ENCODE measurements at regions of chr6 and their contacts with region 1.

Region 1: DNA sequence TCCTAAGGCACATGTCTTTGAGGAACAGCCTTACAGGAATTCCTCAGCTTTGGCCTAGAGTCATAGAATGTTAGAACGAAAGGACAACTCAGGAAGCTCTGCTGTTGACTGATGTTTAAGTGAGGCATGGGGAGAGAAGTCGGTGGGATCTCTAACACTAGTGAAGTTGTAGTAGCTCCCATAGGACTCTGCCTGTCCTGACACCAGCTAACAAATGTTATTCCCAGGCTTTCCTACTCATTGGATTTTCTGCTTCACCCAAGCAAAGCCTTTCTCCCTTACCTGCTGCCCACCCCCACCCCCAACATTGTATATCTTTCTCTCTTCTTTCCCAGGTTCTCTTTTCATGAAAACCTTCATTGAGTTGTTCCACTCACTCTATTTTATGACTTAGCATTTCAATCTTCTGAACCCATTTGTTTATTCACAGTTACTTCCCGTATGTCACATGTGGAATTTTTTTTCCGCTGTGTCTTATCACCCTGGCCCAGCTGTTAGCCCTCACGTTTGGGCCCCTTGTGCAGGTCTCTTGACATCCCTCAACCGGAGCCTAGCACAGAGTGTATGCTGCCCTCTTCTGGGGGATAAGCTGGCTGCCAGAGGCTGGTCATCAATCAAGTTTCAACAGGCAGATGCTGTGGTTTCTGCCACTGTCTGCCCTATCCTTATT is 39.2 kb upstream of the RNF8 start:
- DNase-seq: peak; percentile 70
- ATAC-seq: peak; percentile 80
- H3K4me3 Mint-ChIP-seq: no peak overlapping the region
- H3K27ac Mint-ChIP-seq: peak overlapping the region; percentile 76
- H3K4me1 Mint-ChIP-seq: peaks cover 3% of the 10 kb centered on the region
- H3K27me3 Mint-ChIP-seq: no peaks in the 10 kb centered on the region
- CTCF ChIP-seq: peak; percentile 71

Region 2: DNA sequence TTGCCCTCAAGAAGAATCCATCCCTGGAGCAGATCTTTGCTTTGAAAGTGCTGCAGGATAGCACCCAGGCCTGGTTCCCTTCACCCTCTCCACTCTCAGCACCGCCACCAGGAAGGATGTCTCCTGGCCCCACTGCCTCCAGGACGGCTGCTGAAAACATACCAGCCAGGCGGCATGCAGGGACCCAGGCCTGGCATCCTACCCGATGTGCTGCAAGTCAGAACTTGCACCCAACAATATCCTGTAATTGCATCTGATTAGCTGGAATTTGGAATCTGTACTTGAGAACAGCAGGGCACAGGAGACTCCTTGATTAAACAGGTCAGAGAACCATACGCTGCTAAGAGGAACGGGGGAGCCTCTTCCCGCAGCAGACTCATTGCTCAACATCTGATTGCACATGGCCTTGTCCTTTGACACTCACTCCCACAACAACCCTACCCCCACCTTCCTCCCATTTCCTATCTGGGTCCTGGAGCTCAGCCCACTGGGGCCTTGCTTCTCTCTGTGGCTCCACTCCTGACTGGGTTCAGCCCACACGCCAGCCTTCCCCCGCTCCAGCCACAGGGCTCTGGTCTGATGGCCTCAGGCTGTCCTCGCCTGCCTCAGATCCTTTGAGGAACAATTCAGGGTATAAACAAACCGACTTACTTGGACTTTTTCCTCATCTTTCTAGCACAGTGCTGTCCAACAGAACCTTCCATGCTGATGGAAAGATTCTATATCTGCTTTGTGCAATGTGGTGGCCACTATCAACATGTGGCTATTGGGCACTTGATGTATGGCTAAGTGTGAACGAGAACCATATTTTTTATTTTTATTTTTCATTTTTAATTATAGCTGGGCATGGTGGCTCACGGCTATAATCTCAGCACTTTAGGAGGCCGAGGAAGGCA is 231.1 kb before region 1 on chr6:
- CTCF ChIA-PET with region 1: no interaction called
- POLR2A ChIA-PET with region 1: no interaction called
- intact Hi-C with region 1: no loop called
- DNase-seq: no peak
- ATAC-seq: no peak
- H3K4me3 Mint-ChIP-seq: no peak overlapping the region
- H3K27ac Mint-ChIP-seq: no peak overlapping the region
- H3K4me1 Mint-ChIP-seq: no peaks in the 10 kb centered on the region
- H3K27me3 Mint-ChIP-seq: no peaks in the 10 kb centered on the region
- CTCF ChIP-seq: no peak

Region 3: GRCh38 chr6:37222125-37222967 is 92.3 kb before region 1 on chr6:
- CTCF ChIA-PET with region 1: interaction called, 11 read pairs
- POLR2A ChIA-PET with region 1: no interaction called
- intact Hi-C with region 1: no loop called
- DNase-seq: peak; percentile 88
- ATAC-seq: peak; percentile 98
- H3K4me3 Mint-ChIP-seq: peak overlapping the region; percentile 68
- H3K27ac Mint-ChIP-seq: no peak overlapping the region
- H3K4me1 Mint-ChIP-seq: peaks cover 19% of the 10 kb centered on the region
- H3K27me3 Mint-ChIP-seq: no peaks in the 10 kb centered on the region
- CTCF ChIP-seq: no peak

Region 4: DNA sequence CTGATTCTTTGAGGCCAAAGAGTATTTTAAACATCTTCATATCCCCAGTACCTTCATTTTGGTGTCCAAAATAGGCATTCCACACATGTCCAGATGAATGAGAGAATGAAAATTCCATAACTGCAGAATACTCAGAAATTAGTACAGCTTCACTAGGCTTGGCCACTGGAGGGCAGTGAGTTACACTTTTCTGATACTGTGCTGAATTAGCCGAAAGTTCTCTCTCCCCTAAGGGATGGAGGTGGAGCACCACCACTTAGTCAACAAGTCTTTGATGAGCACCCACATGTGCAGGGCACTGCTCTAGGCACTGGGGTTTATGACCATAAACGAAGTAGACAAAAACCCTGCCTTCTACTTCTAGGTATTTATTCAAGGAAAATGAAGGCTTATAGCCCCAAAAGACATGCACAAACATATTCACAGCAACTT is 10.7 kb before region 1 on chr6:
- CTCF ChIA-PET with region 1: interaction called, 27 read pairs
- POLR2A ChIA-PET with region 1: interaction called, 3 read pairs
- intact Hi-C with region 1: no loop called
- DNase-seq: peak; percentile 32
- ATAC-seq: peak; percentile 84
- H3K4me3 Mint-ChIP-seq: no peak overlapping the region
- H3K27ac Mint-ChIP-seq: no peak overlapping the region
- H3K4me1 Mint-ChIP-seq: no peaks in the 10 kb centered on the region
- H3K27me3 Mint-ChIP-seq: no peaks in the 10 kb centered on the region
- CTCF ChIP-seq: peak; percentile 65

Measured in activated CD8-positive, alpha-beta T cell treated with anti-CD3 and anti-CD28 coated beads for 36 hours (primary cell).